H1 (cell line): ENCODE measurements at regions of chrX and their contacts with region 1.

Region 1: DNA sequence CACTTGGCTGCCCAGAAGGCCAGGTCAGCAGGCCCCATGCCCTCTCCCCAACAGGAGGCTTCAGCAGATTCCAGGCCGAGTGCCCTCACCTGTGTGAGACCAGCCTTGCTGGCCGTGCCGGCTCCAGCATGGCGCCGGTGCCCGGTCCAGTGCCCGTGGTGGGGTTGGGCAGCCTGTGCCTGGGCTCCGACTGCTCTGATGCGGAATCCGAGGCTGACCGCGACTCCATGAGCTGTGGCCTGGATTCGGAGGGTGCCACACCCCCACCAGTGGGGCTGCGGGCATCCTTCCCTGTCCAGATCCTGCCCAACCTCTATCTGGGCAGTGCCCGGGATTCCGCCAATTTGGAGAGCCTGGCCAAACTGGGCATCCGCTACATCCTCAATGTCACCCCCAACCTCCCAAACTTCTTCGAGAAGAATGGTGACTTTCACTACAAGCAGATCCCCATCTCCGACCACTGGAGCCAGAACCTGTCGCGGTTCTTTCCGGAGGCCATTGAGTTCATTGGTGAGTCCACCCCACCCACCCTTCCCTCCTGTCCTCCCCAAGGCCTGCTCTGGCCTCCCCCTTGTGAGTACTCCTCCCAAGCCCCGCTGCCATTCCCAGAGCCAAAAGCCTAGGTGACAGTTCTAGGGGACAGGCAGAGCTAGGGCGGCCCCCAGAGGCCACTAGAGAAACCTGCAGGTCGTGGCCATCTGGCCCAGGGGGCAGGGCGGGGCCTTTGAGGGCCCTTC is 2.3 kb downstream of the DUSP9 start:
- DNase-seq: peak in 1 of 2 experiments; percentile 63
- H3K4me3 ChIP-seq: no peak overlapping the region
- H3K27ac ChIP-seq: no peak overlapping the region
- H3K4me1 ChIP-seq: peaks cover 0 to 10% (median 2%) of the 10 kb centered on the region in 4 experiments; a peak in 4 of 7 replicates
- H3K27me3 ChIP-seq: peaks cover 47 to 51% (median 50%) of the 10 kb centered on the region in 4 experiments
- CTCF ChIP-seq: peak in 2 of 3 experiments; percentile 54 to 85; a peak in 3 of 4 replicates
- EP300 ChIP-seq: no peak
- POLR2A ChIP-seq: no peak
- RAD21 ChIP-seq: peak; percentile 69 to 84

Region 2: DNA sequence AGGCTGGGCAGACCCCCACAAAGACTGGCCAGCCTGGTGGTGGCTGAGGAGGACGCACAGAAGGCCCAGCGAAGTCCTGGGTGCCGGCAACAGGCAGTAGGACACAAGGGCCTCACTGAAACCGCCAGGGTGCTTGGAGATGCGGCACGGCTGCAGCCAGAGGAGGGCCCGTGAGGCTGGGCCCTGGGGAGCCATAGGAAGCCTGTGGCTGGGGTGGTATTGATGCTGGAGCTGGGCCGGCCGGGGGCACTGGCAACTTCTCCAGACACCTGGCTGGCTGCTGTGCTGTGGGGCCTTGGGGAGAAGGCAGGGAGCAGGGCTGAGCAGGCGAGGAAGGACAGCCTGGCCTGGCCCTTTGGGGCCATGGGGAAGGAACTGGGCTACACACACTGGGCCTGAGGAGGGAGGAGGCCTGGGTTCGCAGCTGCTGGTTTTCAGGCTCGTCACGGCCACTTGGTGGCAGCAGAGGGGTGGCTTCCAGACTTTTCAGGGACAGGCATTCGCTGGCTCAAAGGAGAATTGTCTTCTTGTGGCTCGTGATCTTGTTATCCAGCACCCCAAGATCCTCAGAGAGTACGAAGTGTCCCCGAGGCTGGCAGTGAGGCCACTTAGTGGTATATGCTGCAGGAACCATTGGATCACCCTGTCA is 94.7 kb before region 1 on chrX:
- CTCF ChIA-PET with region 1: interaction called, 51 read pairs
- POLR2A ChIA-PET with region 1: no interaction called
- DNase-seq: peak in 1 of 2 experiments; percentile 69
- H3K4me3 ChIP-seq: no peak overlapping the region
- H3K27ac ChIP-seq: no peak overlapping the region
- H3K4me1 ChIP-seq: no peaks in the 10 kb centered on the region
- H3K27me3 ChIP-seq: no peaks in the 10 kb centered on the region; a peak in 1 of 7 replicates
- CTCF ChIP-seq: peak in 2 of 3 experiments; percentile 74 to 76; a peak in 3 of 4 replicates
- EP300 ChIP-seq: no peak
- POLR2A ChIP-seq: no peak
- RAD21 ChIP-seq: peak; percentile 63 to 76

Region 3: GRCh38 chrX:153573984-153574383 is 75.4 kb before region 1 on chrX:
- CTCF ChIA-PET with region 1: interaction called, 27 read pairs
- POLR2A ChIA-PET with region 1: no interaction called
- DNase-seq: no peak
- H3K4me3 ChIP-seq: no peak overlapping the region
- H3K27ac ChIP-seq: no peak overlapping the region
- H3K4me1 ChIP-seq: peaks cover 0 to 6% (median 1%) of the 10 kb centered on the region in 4 experiments; a peak in 3 of 7 replicates
- H3K27me3 ChIP-seq: no peaks in the 10 kb centered on the region
- CTCF ChIP-seq: peak in 1 of 3 experiments; percentile 19; a peak in 2 of 4 replicates
- EP300 ChIP-seq: no peak
- POLR2A ChIP-seq: no peak
- RAD21 ChIP-seq: peak in 1 of 2 experiments; percentile 17; a peak in 1 of 4 replicates

Region 4: GRCh38 chrX:153580700-153581386 is 68.5 kb before region 1 on chrX:
- CTCF ChIA-PET with region 1: interaction called, 27 read pairs
- POLR2A ChIA-PET with region 1: no interaction called
- DNase-seq: peak in 1 of 2 experiments; percentile 76
- H3K4me3 ChIP-seq: no peak overlapping the region
- H3K27ac ChIP-seq: no peak overlapping the region
- H3K4me1 ChIP-seq: peaks cover 0 to 11% (median 1%) of the 10 kb centered on the region in 4 experiments; a peak in 3 of 7 replicates
- H3K27me3 ChIP-seq: no peaks in the 10 kb centered on the region
- CTCF ChIP-seq: peak in 2 of 3 experiments; percentile 44 to 65; a peak in 3 of 4 replicates
- EP300 ChIP-seq: no peak
- POLR2A ChIP-seq: no peak
- RAD21 ChIP-seq: peak; percentile 34 to 53

Region 5: GRCh38 chrX:153609917-153610428 is 39.4 kb before region 1 on chrX:
- CTCF ChIA-PET with region 1: interaction called, 130 read pairs
- POLR2A ChIA-PET with region 1: no interaction called
- DNase-seq: peak in 1 of 2 experiments; percentile 89
- H3K4me3 ChIP-seq: peak overlapping the region in 2 of 4 experiments; percentile 33 to 51; a peak in 4 of 8 replicates
- H3K27ac ChIP-seq: no peak overlapping the region
- H3K4me1 ChIP-seq: no peaks in the 10 kb centered on the region
- H3K27me3 ChIP-seq: peaks cover 0 to 11% (median 8%) of the 10 kb centered on the region in 4 experiments; a peak in 6 of 7 replicates
- CTCF ChIP-seq: peak in 2 of 3 experiments; percentile 83 to 87; a peak in 3 of 4 replicates
- EP300 ChIP-seq: no peak
- POLR2A ChIP-seq: no peak
- RAD21 ChIP-seq: peak; percentile 66 to 76

Region 6: DNA sequence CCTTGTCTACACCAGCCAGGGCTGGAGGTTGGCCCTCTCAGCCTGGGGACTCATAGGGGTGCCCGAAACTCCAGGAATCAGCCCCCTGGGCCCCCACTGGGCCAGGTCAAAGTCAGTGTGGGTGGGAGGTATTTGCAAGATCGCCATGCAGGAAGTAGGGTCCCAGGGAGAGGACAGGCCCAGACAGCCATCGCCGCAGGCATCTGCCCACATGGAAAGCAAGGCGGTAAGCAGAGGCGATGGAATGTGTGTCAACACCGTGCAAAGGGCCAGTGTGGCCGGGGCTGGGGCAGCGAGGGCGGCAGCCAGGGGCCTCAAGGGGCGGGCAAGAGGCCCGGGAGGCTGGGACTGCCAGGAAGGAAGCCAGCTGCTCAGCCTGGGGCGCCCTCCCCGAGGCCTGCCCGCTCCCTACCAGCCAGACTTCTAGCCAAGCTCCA is 21.7 kb before region 1 on chrX:
- CTCF ChIA-PET with region 1: interaction called, 30 read pairs
- POLR2A ChIA-PET with region 1: interaction called, 3 read pairs
- DNase-seq: no peak
- H3K4me3 ChIP-seq: no peak overlapping the region
- H3K27ac ChIP-seq: no peak overlapping the region
- H3K4me1 ChIP-seq: peaks cover 0 to 3% (median 0%) of the 10 kb centered on the region in 4 experiments; a peak in 1 of 7 replicates
- H3K27me3 ChIP-seq: no peaks in the 10 kb centered on the region
- CTCF ChIP-seq: no peak
- EP300 ChIP-seq: no peak
- POLR2A ChIP-seq: no peak
- RAD21 ChIP-seq: no peak

Region 7: DNA sequence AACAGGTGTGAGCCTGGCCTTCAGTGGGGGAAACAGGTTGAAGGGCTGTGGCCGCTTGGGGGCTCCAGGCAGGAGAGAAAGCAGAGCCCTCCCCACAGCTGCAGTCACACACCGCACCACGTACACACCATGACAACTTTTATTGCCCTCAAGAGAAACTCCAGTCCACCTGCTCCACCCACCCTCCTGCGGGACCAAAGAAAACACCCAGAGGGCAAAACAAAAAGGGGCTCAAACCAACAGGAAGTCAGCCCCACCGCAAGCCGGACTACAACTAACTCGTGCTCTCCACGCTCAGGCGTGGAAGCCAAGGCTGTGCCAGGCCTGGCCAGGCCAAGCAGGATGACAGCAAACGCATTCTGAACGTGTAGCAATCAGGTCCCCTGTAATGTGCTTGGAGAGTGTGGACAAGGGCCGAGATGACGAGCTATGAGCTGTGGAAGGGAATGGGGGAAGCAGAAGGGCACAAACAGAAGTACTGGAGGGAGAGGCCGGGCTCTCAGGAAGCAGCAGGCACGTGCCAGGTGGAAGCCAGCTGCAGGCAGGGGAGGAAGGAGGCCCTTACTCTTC is 51.1 kb after region 1 on chrX:
- CTCF ChIA-PET with region 1: no interaction called
- POLR2A ChIA-PET with region 1: no interaction called
- DNase-seq: no peak
- H3K4me3 ChIP-seq: no peak overlapping the region
- H3K27ac ChIP-seq: no peak overlapping the region
- H3K4me1 ChIP-seq: no peaks in the 10 kb centered on the region
- H3K27me3 ChIP-seq: no peaks in the 10 kb centered on the region
- CTCF ChIP-seq: no peak
- EP300 ChIP-seq: no peak
- POLR2A ChIP-seq: no peak
- RAD21 ChIP-seq: no peak